ENCODE measurements at regions of chr22 and their contacts with region 1.

Region 1: GRCh38 chr22:29541845-29542244 is 11.7 kb downstream of the THOC5 start:
- DNase-seq: no peak
- H3K4me3 ChIP-seq: no peak overlapping the region
- H3K27ac ChIP-seq: no peak overlapping the region
- H3K27me3 ChIP-seq: no peaks in the 10 kb centered on the region
- CTCF ChIP-seq: no peak

Region 2: GRCh38 chr22:29394931-29395581 is 146.8 kb before region 1 on chr22:
- intact Hi-C with region 1: loop called in 1 of 2 experiments (anchors 10 kb)
- DNase-seq: peak; percentile 35 to 82 (median 72)
- H3K4me3 ChIP-seq: peak overlapping the region in 1 of 59 donors; percentile 10
- H3K27ac ChIP-seq: peak overlapping the region in 6 of 59 donors; percentile 30 to 61 (median 44)
- H3K27me3 ChIP-seq: no peaks in the 10 kb centered on the region
- CTCF ChIP-seq: peak in 55 of 56 donors; percentile 51 to 87 (median 73)

Region 3: DNA sequence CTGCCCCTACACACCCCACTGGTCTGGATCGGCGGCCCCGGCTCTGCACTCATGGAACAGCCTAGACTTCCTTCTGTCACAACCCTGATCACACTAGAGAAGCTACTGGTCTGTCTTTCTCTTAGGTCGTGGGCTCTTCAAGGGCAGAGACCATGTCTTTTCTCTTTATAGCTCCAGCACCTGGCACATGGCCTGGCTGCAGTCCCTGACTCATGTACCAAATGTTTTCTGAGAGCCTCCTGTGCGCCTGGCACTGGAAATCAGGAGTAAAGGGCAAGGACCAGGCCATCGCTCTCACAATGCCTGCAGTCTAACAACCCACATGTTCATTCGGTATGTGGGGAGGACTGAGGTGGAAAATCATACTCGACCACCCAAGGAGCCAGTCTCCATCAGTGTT is 288.7 kb after region 1 on chr22:
- intact Hi-C with region 1: no loop called
- DNase-seq: no peak
- H3K4me3 ChIP-seq: no peak overlapping the region
- H3K27ac ChIP-seq: no peak overlapping the region
- H3K27me3 ChIP-seq: no peaks in the 10 kb centered on the region
- CTCF ChIP-seq: no peak

Region 4: GRCh38 chr22:29855611-29856181 is 313.9 kb after region 1 on chr22:
- intact Hi-C with region 1: no loop called
- DNase-seq: peak in 1 of 10 donors; percentile 71
- H3K4me3 ChIP-seq: no peak overlapping the region
- H3K27ac ChIP-seq: peak overlapping the region in 1 of 59 donors; percentile 37
- H3K27me3 ChIP-seq: no peaks in the 10 kb centered on the region
- CTCF ChIP-seq: peak in 4 of 56 donors; percentile 10 to 32 (median 16)

Measured in dorsolateral prefrontal cortex (tissue), 120 donors.